PC-3 (cell line): ENCODE measurements at regions of chr6 and their contacts with region 1.

Region 1: GRCh38 chr6:75579951-75580350 is 21.7 kb upstream of the SENP6 start:
- DNase-seq: no peak
- ATAC-seq: no peak
- H3K4me3 ChIP-seq: no peak overlapping the region
- H3K27ac ChIP-seq: no peak overlapping the region
- H3K4me1 ChIP-seq: no peaks in the 10 kb centered on the region
- H3K27me3 ChIP-seq: no peaks in the 10 kb centered on the region
- CTCF ChIP-seq: no peak

Region 2: GRCh38 chr6:75693546-75693945 is 113.6 kb after region 1 on chr6:
- CTCF ChIA-PET with region 1: interaction called, 12 read pairs
- POLR2A ChIA-PET with region 1: no interaction called
- intact Hi-C with region 1: no loop called
- DNase-seq: peak; percentile 8
- ATAC-seq: no peak
- H3K4me3 ChIP-seq: no peak overlapping the region
- H3K27ac ChIP-seq: no peak overlapping the region
- H3K4me1 ChIP-seq: no peaks in the 10 kb centered on the region
- H3K27me3 ChIP-seq: no peaks in the 10 kb centered on the region
- CTCF ChIP-seq: peak; percentile 43; the same call in 1 of the 2 replicates

Region 3: DNA sequence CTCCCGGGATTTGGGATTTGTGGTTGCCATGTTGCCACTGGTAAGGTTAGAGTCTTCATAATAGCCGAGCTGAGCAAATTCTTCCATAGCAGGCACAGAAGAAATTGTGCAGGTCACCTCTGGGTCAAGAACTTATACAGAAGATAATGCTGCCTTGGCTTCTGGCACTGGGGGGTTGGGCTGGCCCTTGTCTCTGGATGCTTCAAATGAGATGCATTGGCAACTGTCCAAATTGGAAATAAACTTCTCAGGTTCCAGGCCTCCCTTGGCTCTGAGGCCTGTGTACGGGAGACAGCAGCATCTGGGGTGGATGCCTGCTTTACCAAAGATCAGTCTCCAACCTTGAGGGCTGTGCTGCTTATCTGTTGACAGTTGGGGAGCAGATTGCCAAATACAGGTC is 195.3 kb after region 1 on chr6:
- CTCF ChIA-PET with region 1: no interaction called
- POLR2A ChIA-PET with region 1: no interaction called
- intact Hi-C with region 1: no loop called
- DNase-seq: no peak
- ATAC-seq: no peak
- H3K4me3 ChIP-seq: no peak overlapping the region
- H3K27ac ChIP-seq: no peak overlapping the region
- H3K4me1 ChIP-seq: no peaks in the 10 kb centered on the region
- H3K27me3 ChIP-seq: no peaks in the 10 kb centered on the region
- CTCF ChIP-seq: no peak